Heart left ventricle (tissue), 16 donors: ENCODE measurements at regions of chr5 and their contacts with region 1.

Region 1: GRCh38 chr5:151499501-151500035 is 52.2 kb downstream of the SLC36A1 start:
- DNase-seq: no peak
- ATAC-seq: peak in 2 of 4 donors; percentile 10 to 47
- H3K4me3 ChIP-seq: no peak overlapping the region
- H3K27ac ChIP-seq: no peak overlapping the region
- H3K4me1 ChIP-seq: peaks cover 0 to 20% (median 0%) of the 10 kb centered on the region in 12 donors
- H3K27me3 ChIP-seq: no peaks in the 10 kb centered on the region
- CTCF ChIP-seq: no peak
- POLR2A ChIP-seq: no peak

Region 2: GRCh38 chr5:151315998-151316597 is 183.5 kb before region 1 on chr5:
- intact Hi-C with region 1: loop called in 2 of 10 experiments (anchors 5 to 10 kb)
- DNase-seq: peak; percentile 59 to 84 (median 78)
- ATAC-seq: peak in 3 of 4 donors; percentile 74 to 91 (median 81)
- H3K4me3 ChIP-seq: no peak overlapping the region
- H3K27ac ChIP-seq: no peak overlapping the region
- H3K4me1 ChIP-seq: peaks cover 0 to 13% (median 0%) of the 10 kb centered on the region in 12 donors
- H3K27me3 ChIP-seq: no peaks in the 10 kb centered on the region
- CTCF ChIP-seq: peak; percentile 76 to 90 (median 82)
- POLR2A ChIP-seq: no peak

Region 3: DNA sequence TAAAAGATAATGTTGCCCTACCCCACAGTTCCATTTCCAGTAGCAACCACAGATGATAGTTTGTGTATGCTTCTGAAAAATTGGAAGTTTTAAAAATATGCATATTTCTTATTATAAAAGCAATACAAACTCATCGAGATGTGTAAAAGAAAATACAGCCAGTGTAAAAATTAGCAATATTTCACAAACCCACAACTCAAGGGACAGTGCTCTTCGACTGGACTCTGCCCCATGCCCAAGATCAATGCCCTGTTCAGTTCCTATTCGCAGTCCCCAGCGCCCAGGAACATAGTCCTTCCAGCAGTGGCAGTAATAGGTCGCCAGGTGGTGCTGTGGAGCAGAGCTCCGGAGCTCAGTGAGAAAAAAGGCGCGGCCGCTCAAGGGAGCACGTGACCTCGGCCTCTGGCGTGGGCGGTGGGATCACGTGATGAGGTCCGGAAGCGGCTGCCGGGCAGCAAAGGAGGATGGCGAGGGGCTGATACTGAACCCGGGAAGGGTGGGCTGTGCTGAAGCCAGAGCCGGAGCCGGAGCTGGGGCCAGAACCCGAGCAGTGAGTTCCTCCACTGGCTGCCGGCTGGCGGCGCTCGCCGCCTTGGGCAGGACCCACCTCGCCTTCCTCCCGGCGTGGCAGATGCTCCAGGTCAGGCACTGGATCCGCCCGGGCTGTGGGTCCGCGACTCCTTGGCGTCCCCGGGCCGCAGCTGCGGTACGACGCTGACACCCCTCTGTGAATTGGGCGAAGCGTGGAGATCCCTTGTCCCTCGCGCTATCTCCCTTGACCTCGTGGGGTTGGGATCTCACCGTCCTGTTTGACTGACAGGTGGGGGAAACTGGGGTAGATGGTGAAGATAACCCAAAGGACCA is 52.2 kb before region 1 on chr5 and contains the start of gene SLC36A1:
- intact Hi-C with region 1: loop called (anchors 1 to 2 kb)
- DNase-seq: peak; percentile 93 to 97 (median 94)
- ATAC-seq: peak; percentile 88 to 98 (median 96)
- H3K4me3 ChIP-seq: peak within 1 kb of the TSS; percentile 32 to 86 (median 76)
- H3K27ac ChIP-seq: peak within 1 kb of the TSS in 8 of 12 donors; percentile 15 to 74 (median 58)
- H3K4me1 ChIP-seq: peaks cover 0 to 24% (median 3%) of the 10 kb centered on the region in 12 donors
- H3K27me3 ChIP-seq: peaks cover 0 to 6% (median 0%) of the 10 kb centered on the region in 9 donors
- CTCF ChIP-seq: peak; percentile 94 to 99 (median 97)
- POLR2A ChIP-seq: peak in 1 of 2 donors; percentile 57
- total RNA-seq, gene SLC36A1: 1.7 to 18.8 (median 2.8) TPM

Region 4: DNA sequence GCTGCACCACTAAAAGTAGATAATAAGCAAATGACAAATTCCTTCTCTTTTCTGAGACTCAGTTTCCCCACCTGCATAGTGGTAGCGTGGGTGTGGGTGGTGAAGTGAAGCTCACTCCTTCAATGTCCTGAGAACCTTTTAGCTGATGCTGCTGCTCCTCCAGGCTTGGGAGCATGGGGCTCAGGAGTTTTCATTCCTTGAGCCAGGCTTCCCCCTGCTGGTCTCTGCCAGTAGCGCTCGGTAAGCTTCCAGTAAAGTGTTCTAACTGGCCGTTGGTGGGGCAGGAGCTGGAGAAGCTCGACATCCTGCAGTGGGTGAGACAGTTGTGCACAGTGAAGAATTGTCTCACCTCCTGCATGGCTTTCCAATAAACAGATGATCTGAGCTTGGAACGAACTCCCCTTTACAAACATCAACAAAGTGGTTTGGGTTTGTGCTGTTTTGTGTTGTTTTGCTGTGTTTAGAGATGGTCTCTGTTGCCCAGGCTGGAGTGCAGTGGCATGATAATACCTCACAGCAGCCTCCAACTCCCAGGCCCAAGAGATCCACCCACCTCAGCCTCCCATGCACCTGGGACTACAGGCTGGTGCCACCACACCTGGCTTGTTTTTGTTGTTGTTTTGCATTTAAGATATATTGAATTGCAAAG is 152.6 kb after region 1 on chr5:
- intact Hi-C with region 1: loop called in 2 of 10 experiments (anchors 5 kb)
- DNase-seq: peak; percentile 74 to 86 (median 82)
- ATAC-seq: peak; percentile 79 to 98 (median 94)
- H3K4me3 ChIP-seq: no peak overlapping the region
- H3K27ac ChIP-seq: no peak overlapping the region
- H3K4me1 ChIP-seq: no peaks in the 10 kb centered on the region
- H3K27me3 ChIP-seq: no peaks in the 10 kb centered on the region
- CTCF ChIP-seq: peak; percentile 77 to 89 (median 86)
- POLR2A ChIP-seq: no peak